Activated CD4-positive, alpha-beta memory T cell treated with anti-CD3 and anti-CD28 coated beads for 36 hours (primary cell): ENCODE measurements at regions of chr7 and their contacts with region 1.

Region 1: GRCh38 chr7:149147072-149147751 is at the start of gene ZNF398:
- DNase-seq: peak; percentile 86
- H3K4me3 Mint-ChIP-seq: peak within 1 kb of the TSS; percentile 79
- H3K27ac Mint-ChIP-seq: peak within 1 kb of the TSS; percentile 87
- H3K4me1 Mint-ChIP-seq: peaks cover 31% of the 10 kb centered on the region
- H3K27me3 Mint-ChIP-seq: no peaks in the 10 kb centered on the region
- total RNA-seq, gene ZNF398: 8.4 to 9.4 TPM

Region 2: DNA sequence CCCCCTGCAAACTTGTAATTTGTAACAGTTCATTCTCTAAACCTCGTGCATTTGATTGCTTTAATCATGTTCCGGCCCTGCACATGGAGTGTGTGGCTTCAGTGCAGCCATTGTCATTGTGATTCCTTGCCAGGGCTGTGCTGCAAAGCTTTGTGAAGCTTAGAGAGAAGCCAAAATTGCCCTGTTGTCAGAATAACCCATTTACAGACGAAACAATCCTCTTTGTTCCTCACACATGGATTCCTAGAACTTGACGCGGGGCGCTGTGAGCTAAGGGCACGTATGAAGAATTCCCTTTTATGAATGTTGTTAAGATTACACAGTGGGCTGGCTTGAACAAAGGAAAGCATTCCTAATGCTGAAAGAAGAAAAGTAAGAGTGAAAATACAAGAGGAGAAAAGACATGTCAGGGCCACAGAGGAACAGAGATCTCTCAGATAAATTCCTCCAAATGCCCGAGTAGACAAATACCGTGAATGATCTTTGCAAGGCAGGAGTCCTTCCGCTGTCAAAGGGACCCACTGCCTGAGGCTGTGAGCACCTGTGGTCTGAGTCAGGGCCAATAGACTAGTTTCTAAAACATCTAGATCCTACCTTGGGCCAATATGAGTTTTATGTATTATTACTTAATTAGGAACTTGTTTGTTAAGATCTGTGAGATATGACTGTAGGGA is 762.1 kb before region 1 on chr7:
- CTCF ChIA-PET with region 1: no interaction called
- POLR2A ChIA-PET with region 1: no interaction called
- intact Hi-C with region 1: no loop called
- DNase-seq: no peak
- H3K4me3 Mint-ChIP-seq: no peak overlapping the region
- H3K27ac Mint-ChIP-seq: no peak overlapping the region
- H3K4me1 Mint-ChIP-seq: no peaks in the 10 kb centered on the region
- H3K27me3 Mint-ChIP-seq: no peaks in the 10 kb centered on the region

Region 3: DNA sequence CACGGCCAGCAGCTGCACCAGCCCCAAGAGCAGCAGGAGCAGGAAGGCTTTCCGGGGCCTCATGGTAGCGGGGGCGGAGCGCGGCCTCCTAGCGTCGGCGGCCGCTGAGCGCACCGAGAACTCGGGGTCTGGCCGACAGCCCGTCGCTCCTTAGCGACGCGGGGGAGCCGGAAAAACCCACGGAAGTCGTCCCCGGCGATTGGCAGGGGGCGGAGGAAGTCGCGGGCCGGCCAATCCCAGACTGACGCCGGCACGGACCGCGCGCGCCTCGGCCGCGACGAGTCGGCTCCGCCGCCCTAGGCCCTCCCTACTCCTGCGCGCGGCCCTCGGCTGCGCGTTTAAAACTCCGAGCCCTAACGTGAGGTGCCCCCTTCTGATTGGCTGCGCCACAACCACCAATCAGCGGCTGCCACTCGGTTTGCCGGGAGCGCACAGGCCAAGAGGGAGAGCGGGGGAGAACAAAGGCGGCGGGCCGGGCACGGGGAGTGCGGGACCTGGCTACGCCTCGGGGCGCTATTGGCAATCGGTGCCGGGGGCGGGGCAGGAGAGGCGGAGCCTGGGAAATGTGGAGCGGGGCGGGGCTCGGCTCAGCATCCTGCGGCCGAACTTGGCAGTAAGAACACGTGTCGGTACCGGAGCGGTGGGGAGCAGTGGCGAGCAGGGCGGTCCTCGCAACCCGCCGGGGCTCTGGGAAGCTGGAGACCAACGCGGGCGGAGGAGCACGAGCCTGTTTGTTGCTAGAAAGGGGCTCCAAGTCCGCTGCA is 118.7 kb before region 1 on chr7 and contains the start of gene PDIA4:
- CTCF ChIA-PET with region 1: interaction called, 8 read pairs
- POLR2A ChIA-PET with region 1: no interaction called
- intact Hi-C with region 1: loop called (anchors 1 kb)
- DNase-seq: peak; percentile 100
- H3K4me3 Mint-ChIP-seq: peak within 1 kb of the TSS; percentile 96
- H3K27ac Mint-ChIP-seq: peak within 1 kb of the TSS; percentile 88
- H3K4me1 Mint-ChIP-seq: peaks cover 33% of the 10 kb centered on the region
- H3K27me3 Mint-ChIP-seq: no peaks in the 10 kb centered on the region
- total RNA-seq, gene PDIA4: 108 to 112 TPM

Region 4: DNA sequence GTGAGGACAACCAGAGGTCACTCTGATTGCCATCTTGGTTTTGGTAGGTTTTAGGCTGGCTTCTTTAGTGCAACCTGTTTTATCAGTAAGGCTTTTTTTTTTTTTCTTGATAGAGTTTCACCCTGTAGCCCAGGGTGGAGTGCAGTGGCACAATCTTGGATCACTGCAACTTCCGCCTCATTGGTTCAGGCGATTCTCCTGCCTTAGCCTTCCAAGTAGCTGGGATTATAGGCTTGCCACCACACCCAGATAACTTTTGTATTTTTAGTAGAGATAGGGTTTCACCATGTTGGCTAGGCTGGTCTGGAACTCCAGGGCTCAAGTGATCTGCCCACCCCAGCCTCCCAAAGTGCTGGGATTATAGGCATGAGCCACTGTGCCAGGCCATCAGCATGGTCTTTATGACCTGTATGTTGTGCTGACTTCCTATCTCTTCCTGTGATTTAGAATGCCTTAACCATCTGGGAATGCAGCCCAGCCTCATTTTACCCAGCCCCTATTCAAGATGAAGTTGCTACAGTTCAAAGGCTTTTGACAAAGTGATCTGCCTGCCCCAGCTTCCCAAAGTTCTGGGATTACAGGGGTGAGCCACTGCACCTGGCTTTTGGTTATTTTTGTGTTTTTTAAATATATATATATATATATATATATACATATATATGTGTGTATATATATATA is 14.0 kb before region 1 on chr7:
- CTCF ChIA-PET with region 1: interaction called, 49 read pairs
- POLR2A ChIA-PET with region 1: interaction called, 5 read pairs
- intact Hi-C with region 1: no loop called
- DNase-seq: no peak
- H3K4me3 Mint-ChIP-seq: no peak overlapping the region
- H3K27ac Mint-ChIP-seq: no peak overlapping the region
- H3K4me1 Mint-ChIP-seq: peaks cover 4% of the 10 kb centered on the region
- H3K27me3 Mint-ChIP-seq: no peaks in the 10 kb centered on the region

Region 5: GRCh38 chr7:149209518-149210269 is 62.5 kb after region 1 on chr7:
- CTCF ChIA-PET with region 1: interaction called, 9 read pairs
- POLR2A ChIA-PET with region 1: interaction called, 5 read pairs
- intact Hi-C with region 1: loop called (anchors 1 kb)
- DNase-seq: peak; percentile 97
- H3K4me3 Mint-ChIP-seq: peak overlapping the region; percentile 56
- H3K27ac Mint-ChIP-seq: peak overlapping the region; percentile 98
- H3K4me1 Mint-ChIP-seq: peaks cover 40% of the 10 kb centered on the region
- H3K27me3 Mint-ChIP-seq: no peaks in the 10 kb centered on the region

Region 6: DNA sequence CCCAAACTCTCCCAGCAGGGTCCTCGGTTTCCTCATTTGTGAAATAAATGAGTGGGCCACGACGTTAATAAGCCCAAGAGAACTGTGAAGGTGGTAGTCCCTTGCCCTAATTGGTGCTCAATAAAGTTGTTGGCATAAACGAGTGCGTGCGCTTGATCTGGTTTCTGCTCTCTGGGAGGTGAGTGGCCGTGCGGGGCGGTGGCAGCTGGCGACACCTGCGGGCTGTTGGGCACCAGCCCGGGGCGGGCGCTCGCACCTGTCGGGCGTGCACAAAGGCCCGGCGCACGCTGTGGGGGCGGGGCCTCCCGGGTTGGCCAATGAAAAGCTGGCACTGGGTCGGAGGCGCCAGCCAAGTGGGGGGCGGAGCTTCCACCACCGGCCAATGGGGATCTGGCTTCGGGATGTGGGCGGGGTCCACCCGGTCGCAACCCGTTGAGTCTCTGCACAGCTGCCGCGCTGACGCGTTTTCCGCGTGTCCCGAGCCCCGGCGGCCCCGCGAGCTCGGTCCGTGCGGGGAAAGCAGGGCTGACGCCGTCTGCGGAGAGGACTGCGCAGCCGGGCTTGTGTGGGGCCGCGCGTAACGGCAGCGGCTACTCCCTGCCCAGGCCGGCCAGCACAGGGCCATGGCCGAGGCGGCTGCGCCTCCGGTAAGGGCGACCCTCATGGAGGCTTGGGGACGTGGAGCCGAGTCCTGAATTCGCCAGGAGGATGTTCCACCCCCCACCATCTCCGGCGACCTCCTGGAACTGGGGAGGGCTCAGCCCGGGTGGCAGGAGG is 137.8 kb after region 1 on chr7:
- CTCF ChIA-PET with region 1: interaction called, 13 read pairs
- POLR2A ChIA-PET with region 1: no interaction called
- intact Hi-C with region 1: no loop called
- DNase-seq: peak; percentile 99
- H3K4me3 Mint-ChIP-seq: peak overlapping the region; percentile 82
- H3K27ac Mint-ChIP-seq: peak overlapping the region; percentile 48
- H3K4me1 Mint-ChIP-seq: peaks cover 37% of the 10 kb centered on the region
- H3K27me3 Mint-ChIP-seq: no peaks in the 10 kb centered on the region

Region 7: GRCh38 chr7:149873074-149873969 is 726.1 kb after region 1 on chr7 and contains the start of gene ATP6V0E2:
- CTCF ChIA-PET with region 1: no interaction called
- POLR2A ChIA-PET with region 1: no interaction called
- intact Hi-C with region 1: loop called (anchors 10 kb)
- DNase-seq: peak; percentile 96
- H3K4me3 Mint-ChIP-seq: peak within 1 kb of the TSS; percentile 86
- H3K27ac Mint-ChIP-seq: peak within 1 kb of the TSS; percentile 86
- H3K4me1 Mint-ChIP-seq: peaks cover 69% of the 10 kb centered on the region
- H3K27me3 Mint-ChIP-seq: no peaks in the 10 kb centered on the region
- total RNA-seq, gene ATP6V0E2: 33.5 to 34.1 TPM